ENCODE measurements at regions of chrX and their contacts with region 1.

Region 1: DNA sequence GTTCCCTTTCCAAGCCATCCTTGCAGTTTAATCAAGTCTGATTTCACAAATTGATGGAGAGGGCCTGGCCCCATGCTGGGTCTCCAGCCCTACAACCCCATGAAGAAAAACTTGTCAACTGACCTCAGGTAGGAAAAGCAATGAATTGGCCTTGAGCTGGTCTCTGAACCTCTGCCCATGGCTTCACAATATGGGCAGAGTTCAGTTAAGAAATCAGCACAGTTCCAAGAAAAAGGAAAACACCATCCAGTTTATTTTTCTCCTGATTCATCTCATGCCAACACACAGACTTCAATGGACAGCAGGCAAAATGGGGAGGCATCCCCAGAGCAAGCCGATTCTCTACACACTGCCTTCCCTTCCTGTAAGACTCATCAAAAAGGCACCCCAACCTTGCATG is 3.3 kb downstream of the RIPPLY1 start:
- DNase-seq: no peak
- ATAC-seq: no peak
- H3K4me3 ChIP-seq: no peak overlapping the region
- H3K27ac ChIP-seq: no peak overlapping the region
- H3K4me1 ChIP-seq: peaks cover 19% of the 10 kb centered on the region
- H3K27me3 ChIP-seq: no peaks in the 10 kb centered on the region
- CTCF ChIP-seq: no peak

Region 2: GRCh38 chrX:105695451-105695850 is 1204.4 kb before region 1 on chrX:
- intact Hi-C with region 1: no loop called
- DNase-seq: no peak
- ATAC-seq: no peak
- H3K4me3 ChIP-seq: no peak overlapping the region
- H3K27ac ChIP-seq: no peak overlapping the region
- H3K4me1 ChIP-seq: peaks cover 7% of the 10 kb centered on the region
- H3K27me3 ChIP-seq: peaks cover 0 to 11% (median 0%) of the 10 kb centered on the region in 3 donors
- CTCF ChIP-seq: no peak

Region 3: GRCh38 chrX:106952988-106953387 is 53.1 kb after region 1 on chrX:
- intact Hi-C with region 1: loop called (anchors 2 kb)
- DNase-seq: no peak
- ATAC-seq: peak in 2 of 4 donors; percentile 55 to 65
- H3K4me3 ChIP-seq: no peak overlapping the region
- H3K27ac ChIP-seq: no peak overlapping the region
- H3K4me1 ChIP-seq: no peaks in the 10 kb centered on the region
- H3K27me3 ChIP-seq: peaks cover 0 to 16% (median 0%) of the 10 kb centered on the region in 3 donors
- CTCF ChIP-seq: peak; percentile 47

Region 4: GRCh38 chrX:107205770-107206696 is 306.2 kb after region 1 on chrX and contains the starts of genes DNAAF6 and NUP62CL:
- intact Hi-C with region 1: no loop called
- DNase-seq: peak; percentile 32 to 56
- ATAC-seq: peak in 3 of 4 donors; percentile 42 to 51 (median 43)
- H3K4me3 ChIP-seq: peak within 1 kb of the TSS; percentile 59
- H3K27ac ChIP-seq: no peak within 1 kb of the TSS
- H3K4me1 ChIP-seq: no peaks in the 10 kb centered on the region
- H3K27me3 ChIP-seq: peaks cover 0 to 18% (median 3%) of the 10 kb centered on the region in 3 donors
- CTCF ChIP-seq: no peak
- total RNA-seq, gene DNAAF6: not detected
- total RNA-seq, gene NUP62CL: 0.34 TPM in 1 of 4 donors, not detected in the others